GM10248 (cell line): ENCODE measurements at regions of chr5 and their contacts with region 1.

Region 1: DNA sequence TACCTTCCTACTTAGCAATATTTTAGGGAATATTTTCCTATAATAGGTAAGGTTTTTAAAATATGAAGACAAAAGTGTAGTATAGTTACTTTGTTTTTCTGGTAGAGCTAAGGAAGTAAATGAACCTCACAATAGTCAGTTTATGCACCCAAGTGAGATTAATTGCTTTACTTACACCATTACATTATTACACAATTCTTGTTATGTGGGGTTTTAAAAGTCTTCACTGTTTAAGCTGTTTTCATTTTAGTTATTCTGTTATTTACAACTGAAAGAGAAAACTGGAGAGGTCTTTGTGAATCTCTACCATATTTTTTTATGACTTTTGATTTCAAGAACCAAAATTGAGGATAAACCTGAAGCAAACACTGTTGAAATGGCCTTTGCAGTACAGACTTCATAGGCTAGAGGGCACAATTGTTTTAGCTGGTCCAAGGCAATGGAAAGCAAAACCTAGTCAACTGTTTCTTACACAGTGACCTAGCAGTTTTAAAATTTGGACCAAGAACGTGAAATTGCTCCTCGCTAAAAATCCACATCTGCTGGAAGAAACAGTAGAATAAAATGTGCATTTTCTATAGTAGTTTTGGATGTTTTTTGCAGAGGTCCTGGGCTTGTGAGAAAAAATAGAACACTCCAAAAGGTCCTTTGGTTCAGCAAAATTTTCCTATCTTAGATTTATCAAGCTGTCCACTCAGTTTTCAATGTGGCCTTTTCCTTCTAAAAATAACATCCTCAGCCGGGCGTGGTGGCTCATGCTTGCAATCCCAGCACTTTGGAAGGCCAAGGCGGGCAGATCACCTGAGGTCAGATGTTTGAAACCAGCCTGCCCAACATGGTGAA is 66.4 kb upstream of the FER start:
- DNase-seq: peak; percentile 67
- CTCF ChIP-seq: peak; percentile 82

Region 2: DNA sequence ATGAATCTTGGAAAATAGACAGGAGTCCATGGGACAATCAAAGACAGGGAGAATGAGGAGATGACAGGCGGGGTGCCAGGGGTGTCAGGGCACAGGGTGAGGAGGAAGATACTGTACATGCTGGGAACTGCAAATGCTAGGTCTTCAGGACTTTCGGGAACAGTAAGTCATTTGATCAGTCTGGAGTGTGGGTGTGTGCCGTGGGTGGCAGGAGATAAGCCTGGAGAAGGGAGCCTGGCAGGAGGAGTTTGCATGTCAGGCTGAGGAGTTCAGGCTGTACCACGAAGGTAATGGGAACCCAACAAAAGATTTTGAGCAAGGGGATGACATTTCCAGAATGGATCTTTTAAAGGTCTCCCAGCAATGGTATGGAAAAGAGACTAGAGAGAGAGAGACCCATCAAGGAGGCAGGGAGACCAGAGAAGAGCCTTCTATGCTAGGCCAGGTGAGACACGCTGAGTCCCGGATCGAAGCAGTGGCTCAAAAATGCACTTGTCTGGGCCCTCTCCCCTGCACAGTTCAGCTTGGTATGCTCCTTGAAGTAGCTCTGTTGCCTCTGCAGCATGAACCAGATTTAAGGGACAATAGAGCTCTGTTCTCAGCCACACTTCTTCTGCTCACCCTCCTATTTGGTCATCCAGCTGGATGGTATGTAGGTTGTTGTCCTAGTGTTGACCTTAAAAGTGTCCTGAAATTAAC is 10.6 kb before region 1 on chr5:
- CTCF ChIA-PET with region 1: interaction called, 23 read pairs
- POLR2A ChIA-PET with region 1: no interaction called
- DNase-seq: no peak
- CTCF ChIP-seq: no peak

Region 3: DNA sequence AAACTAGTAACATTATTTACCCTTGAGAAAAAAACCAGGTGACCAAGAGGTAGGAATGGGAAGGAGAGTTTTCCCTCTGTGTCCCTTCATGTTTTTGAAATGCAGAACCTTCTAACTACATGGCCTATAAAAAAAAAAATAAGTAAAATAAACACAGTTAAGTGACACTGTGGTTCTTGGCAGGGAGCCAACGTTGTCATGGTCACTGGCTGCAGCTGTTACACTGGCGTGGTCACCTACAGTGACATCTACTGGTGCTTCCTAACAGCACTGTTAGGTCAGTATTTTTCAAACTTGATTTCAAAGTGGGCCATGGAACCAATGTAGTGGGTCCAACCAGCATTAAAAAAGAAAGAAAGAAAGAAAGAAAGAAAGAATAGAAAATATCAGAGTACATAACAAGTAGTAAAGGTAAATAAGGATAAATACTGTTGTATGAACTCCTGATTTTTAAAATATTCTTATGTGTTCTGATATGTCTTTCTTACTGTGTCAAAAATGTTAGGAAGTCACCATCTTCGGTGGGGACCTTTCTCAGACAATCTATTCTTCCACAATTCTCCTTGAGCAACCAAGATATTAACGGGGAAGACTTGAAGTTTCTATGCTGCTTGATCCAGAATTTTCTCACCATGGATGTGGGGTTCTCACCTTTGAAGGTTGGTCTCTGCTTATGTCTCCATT is 787.6 kb after region 1 on chr5:
- CTCF ChIA-PET with region 1: interaction called, 11 read pairs
- POLR2A ChIA-PET with region 1: no interaction called
- DNase-seq: peak; percentile 73
- CTCF ChIP-seq: peak; percentile 83